ENCODE measurements at regions of chr19 and their contacts with region 1.

Region 1: DNA sequence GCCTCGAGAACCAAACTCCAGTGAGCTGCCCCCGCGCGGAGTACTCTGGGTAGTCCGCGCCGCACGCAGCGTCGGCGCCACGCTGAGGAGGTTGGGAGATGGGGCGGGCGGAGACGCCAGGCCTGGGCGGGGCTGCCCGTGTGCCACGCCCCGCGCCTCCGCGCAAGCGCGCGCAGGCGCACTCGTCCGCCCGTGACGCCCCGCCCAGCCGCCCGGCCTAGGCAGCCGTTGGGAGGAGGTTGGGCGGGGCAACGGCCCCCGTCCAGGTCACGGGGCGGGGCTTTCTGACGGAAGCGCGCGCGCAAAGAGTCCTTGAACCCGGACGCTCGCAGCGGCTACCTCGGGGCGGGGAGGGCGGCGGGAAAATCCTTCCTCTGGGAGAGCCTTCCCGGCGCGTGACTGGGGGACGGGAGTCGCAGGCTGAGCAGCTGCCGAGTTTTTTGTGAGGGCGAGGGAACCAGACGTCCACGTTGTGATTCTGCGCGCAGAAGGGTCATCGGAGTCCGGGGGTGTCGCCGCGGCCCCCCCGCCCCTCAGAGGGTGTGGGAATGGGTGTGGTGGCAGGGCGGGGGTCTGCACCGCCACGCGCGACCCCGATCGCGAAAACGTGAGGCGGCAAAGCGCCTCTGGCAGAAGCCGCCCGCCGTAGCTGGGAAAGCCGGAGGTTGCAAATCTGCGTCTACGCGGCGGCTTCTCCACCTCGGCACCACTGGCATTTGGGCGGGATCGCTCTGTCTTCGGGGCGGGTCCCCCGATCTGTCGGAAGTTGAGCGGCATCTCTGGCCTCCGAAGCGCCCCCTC is at the start of gene MED26:
- DNase-seq: peak; percentile 92 to 94
- H3K4me3 ChIP-seq: peak within 1 kb of the TSS; percentile 99
- H3K4me3 Mint-ChIP-seq: peak within 1 kb of the TSS; percentile 84
- H3K27ac Mint-ChIP-seq: peak within 1 kb of the TSS; percentile 87
- H3K4me1 ChIP-seq: no peaks in the 10 kb centered on the region
- H3K4me1 Mint-ChIP-seq: peaks cover 13% of the 10 kb centered on the region
- H3K27me3 ChIP-seq: no peaks in the 10 kb centered on the region
- H3K27me3 Mint-ChIP-seq: no peaks in the 10 kb centered on the region
- CTCF ChIP-seq: no peak
- total RNA-seq, gene MED26: 11.4 and 11.6 TPM in 2 replicates

Region 2: GRCh38 chr19:16435238-16435917 is 193.0 kb before region 1 on chr19:
- CTCF ChIA-PET with region 1: no interaction called
- POLR2A ChIA-PET with region 1: no interaction called
- intact Hi-C with region 1: no loop called
- DNase-seq: no peak
- H3K4me3 ChIP-seq: no peak overlapping the region
- H3K4me3 Mint-ChIP-seq: no peak overlapping the region
- H3K27ac Mint-ChIP-seq: no peak overlapping the region
- H3K4me1 ChIP-seq: no peaks in the 10 kb centered on the region
- H3K4me1 Mint-ChIP-seq: no peaks in the 10 kb centered on the region
- H3K27me3 ChIP-seq: no peaks in the 10 kb centered on the region
- H3K27me3 Mint-ChIP-seq: no peaks in the 10 kb centered on the region
- CTCF ChIP-seq: no peak

Region 3: DNA sequence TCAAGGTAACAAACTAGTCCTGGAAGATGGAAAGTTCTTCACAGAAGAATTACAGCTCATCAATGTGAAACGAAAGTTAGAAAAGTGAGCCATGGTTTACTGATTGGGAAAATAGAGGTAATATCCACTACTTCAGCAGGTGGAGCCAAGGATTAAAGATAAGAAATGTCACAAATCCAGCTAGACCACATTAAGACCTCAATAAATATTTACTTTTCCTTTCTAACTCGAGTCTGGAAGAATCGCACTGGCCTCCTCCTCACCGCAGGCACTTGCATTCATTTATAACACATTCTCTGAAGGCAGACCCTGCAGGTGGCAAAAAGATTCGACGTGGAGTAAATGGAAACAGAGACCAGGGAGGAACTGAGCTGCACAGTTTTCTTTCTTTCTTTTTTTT is 63.6 kb before region 1 on chr19:
- CTCF ChIA-PET with region 1: no interaction called
- POLR2A ChIA-PET with region 1: interaction called, 5 read pairs
- intact Hi-C with region 1: loop called (anchors 2 kb)
- DNase-seq: peak in 1 of 2 experiments; percentile 49
- H3K4me3 ChIP-seq: no peak overlapping the region
- H3K4me3 Mint-ChIP-seq: peak overlapping the region; percentile 32
- H3K27ac Mint-ChIP-seq: no peak overlapping the region
- H3K4me1 ChIP-seq: peaks cover 15% of the 10 kb centered on the region
- H3K4me1 Mint-ChIP-seq: peaks cover 12% of the 10 kb centered on the region
- H3K27me3 ChIP-seq: no peaks in the 10 kb centered on the region
- H3K27me3 Mint-ChIP-seq: no peaks in the 10 kb centered on the region
- CTCF ChIP-seq: no peak

Region 4: GRCh38 chr19:16572332-16573211 is 55.8 kb before region 1 on chr19 and contains the start of gene SLC35E1:
- CTCF ChIA-PET with region 1: no interaction called
- POLR2A ChIA-PET with region 1: interaction called, 9 read pairs
- intact Hi-C with region 1: loop called (anchors 2 kb)
- DNase-seq: peak; percentile 96 to 97
- H3K4me3 ChIP-seq: peak within 1 kb of the TSS; percentile 67
- H3K4me3 Mint-ChIP-seq: peak within 1 kb of the TSS; percentile 89
- H3K27ac Mint-ChIP-seq: peak within 1 kb of the TSS; percentile 97
- H3K4me1 ChIP-seq: peaks cover 13% of the 10 kb centered on the region
- H3K4me1 Mint-ChIP-seq: peaks cover 6% of the 10 kb centered on the region
- H3K27me3 ChIP-seq: no peaks in the 10 kb centered on the region
- H3K27me3 Mint-ChIP-seq: no peaks in the 10 kb centered on the region
- CTCF ChIP-seq: no peak
- total RNA-seq, gene SLC35E1: 37.9 and 41.3 TPM in 2 replicates

Region 5: DNA sequence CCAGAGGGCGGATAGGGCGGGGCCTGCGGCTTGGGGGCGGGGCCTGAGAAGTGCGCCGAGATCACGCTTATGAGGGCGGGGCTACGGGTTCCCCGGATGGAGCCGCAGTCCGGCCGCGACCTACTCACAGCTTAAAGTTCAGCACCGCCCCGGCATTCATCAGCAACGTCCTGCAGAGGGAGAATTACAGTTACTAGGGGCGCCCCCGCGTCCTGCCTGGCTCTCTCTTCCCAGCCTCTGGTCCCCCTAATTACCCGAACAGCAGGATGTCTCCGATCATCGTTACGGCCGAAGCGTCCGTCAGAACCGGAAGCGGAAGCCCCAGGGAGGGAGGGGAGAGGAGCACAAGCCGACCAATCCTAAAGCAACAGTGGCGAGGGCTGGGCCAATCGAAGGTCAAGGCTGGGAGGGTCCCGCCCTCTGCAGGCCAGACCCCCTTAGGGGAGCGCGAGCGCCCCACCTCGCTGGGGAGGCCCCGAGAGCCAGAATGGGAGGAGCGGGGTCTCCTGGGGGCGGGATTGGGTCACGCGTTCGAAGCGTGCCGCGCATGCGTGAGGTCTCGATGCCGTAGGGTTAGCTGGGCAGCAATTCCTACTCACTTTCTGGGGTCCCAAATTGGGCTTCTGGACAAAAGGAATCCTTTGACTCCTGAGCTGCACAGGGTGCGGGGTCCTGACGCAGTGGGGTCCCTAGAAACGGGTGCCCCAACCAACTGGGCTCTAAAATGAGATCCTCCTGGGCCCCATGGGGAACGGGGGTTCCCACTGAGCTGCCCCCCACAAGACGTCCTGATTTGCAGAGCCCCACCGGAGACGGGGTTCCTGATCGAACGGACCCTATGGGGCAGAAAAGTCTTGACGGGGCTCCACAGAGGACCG is 31.7 kb after region 1 on chr19 and contains the start of gene SMIM7:
- CTCF ChIA-PET with region 1: no interaction called
- POLR2A ChIA-PET with region 1: interaction called, 3 read pairs
- intact Hi-C with region 1: loop called (anchors 2 kb)
- DNase-seq: peak; percentile 98
- H3K4me3 ChIP-seq: peak within 1 kb of the TSS; percentile 97
- H3K4me3 Mint-ChIP-seq: peak within 1 kb of the TSS; percentile 100
- H3K27ac Mint-ChIP-seq: peak within 1 kb of the TSS; percentile 99
- H3K4me1 ChIP-seq: peaks cover 5% of the 10 kb centered on the region; the same call in 1 of the 2 replicates
- H3K4me1 Mint-ChIP-seq: peaks cover 7% of the 10 kb centered on the region
- H3K27me3 ChIP-seq: no peaks in the 10 kb centered on the region
- H3K27me3 Mint-ChIP-seq: no peaks in the 10 kb centered on the region
- CTCF ChIP-seq: peak in 1 of 2 experiments; percentile 41
- total RNA-seq, gene SMIM7: 65.3 and 74.4 TPM in 2 replicates

Region 6: DNA sequence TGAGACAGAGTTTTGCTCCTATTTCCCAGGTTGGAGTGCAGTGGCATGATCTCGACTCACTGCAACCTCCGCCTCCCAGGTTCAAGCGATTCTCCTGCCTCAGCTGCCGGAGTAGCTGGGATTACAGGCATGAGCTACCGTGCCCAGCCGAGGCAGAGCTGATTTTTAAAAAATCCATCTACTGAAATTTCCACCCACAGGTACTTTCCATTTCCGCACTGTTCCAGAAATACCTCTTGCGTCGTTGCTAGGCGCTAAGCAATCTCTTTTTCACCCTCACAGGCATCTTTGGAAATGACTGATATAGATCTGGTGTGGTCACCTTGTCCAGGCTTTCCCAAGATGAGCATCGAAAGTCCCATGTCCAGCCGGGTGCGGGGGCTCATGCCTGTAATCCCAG is 41.9 kb after region 1 on chr19:
- CTCF ChIA-PET with region 1: no interaction called
- POLR2A ChIA-PET with region 1: no interaction called
- intact Hi-C with region 1: no loop called
- DNase-seq: no peak
- H3K4me3 ChIP-seq: no peak overlapping the region
- H3K4me3 Mint-ChIP-seq: no peak overlapping the region
- H3K27ac Mint-ChIP-seq: no peak overlapping the region
- H3K4me1 ChIP-seq: no peaks in the 10 kb centered on the region
- H3K4me1 Mint-ChIP-seq: no peaks in the 10 kb centered on the region
- H3K27me3 ChIP-seq: no peaks in the 10 kb centered on the region
- H3K27me3 Mint-ChIP-seq: no peaks in the 10 kb centered on the region
- CTCF ChIP-seq: no peak